ENCODE measurements at regions of chr1 and their contacts with region 1.

Region 1: GRCh38 chr1:192580351-192580962 is 4.9 kb downstream of the RGS1 start:
- DNase-seq: peak; percentile 55
- ATAC-seq: no peak
- H3K4me3 ChIP-seq: no peak overlapping the region
- H3K4me3 Mint-ChIP-seq: peak overlapping the region; percentile 73
- H3K27ac ChIP-seq: no peak overlapping the region
- H3K27ac Mint-ChIP-seq: no peak overlapping the region
- H3K4me1 ChIP-seq: peaks cover 11 to 13% of the 10 kb centered on the region in 2 donors
- H3K4me1 Mint-ChIP-seq: peaks cover 38% of the 10 kb centered on the region
- H3K27me3 ChIP-seq: peaks cover 0 to 5% (median 0%) of the 10 kb centered on the region in 4 experiments
- H3K27me3 Mint-ChIP-seq: peaks cover 6% of the 10 kb centered on the region
- CTCF ChIP-seq: peak; percentile 31

Region 2: DNA sequence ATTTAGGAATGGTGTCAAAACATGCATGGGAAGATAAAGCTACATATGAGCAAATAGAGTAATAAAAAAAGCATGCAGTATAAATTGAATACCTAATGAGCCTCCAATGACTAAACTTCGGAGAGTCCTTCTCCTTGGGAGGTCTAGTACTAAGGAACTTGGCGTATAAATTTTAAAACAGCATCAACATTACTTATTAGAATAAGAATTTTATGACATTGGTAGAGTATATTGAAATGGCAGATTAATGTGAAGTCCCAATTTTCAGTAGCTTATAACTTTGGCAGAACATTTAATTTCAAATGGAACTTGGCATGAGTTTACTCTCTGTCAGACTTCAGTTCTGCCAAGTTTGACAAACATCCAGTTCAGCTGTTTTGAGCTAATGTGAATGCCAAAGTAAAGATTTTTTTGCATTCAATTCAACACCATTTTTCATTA is 526.9 kb before region 1 on chr1:
- CTCF ChIA-PET with region 1: no interaction called
- POLR2A ChIA-PET with region 1: no interaction called
- intact Hi-C with region 1: no loop called
- DNase-seq: no peak
- ATAC-seq: no peak
- H3K4me3 ChIP-seq: no peak overlapping the region
- H3K4me3 Mint-ChIP-seq: no peak overlapping the region
- H3K27ac ChIP-seq: no peak overlapping the region
- H3K27ac Mint-ChIP-seq: no peak overlapping the region
- H3K4me1 ChIP-seq: no peaks in the 10 kb centered on the region
- H3K4me1 Mint-ChIP-seq: no peaks in the 10 kb centered on the region
- H3K27me3 ChIP-seq: no peaks in the 10 kb centered on the region
- H3K27me3 Mint-ChIP-seq: no peaks in the 10 kb centered on the region
- CTCF ChIP-seq: no peak

Region 3: DNA sequence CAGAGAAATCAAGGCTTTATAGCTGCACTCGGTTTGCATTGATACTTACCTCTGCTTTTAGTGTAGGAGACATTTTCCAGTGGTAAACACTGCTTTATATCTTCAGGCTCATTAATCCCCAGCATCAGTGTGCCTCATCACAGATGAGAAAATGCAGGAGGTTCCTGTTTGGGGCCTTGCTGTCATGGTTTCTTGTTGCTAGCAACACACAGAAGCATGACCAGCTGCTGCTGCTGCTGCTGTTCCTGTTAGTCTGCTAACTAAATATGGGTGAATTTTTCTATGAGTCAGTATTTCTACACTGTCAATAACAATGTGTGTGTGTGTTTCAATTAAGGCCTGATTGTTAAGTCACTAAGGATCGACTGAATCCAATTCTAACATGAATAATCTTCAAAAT is 90.7 kb before region 1 on chr1:
- CTCF ChIA-PET with region 1: interaction called, 4 read pairs
- POLR2A ChIA-PET with region 1: no interaction called
- intact Hi-C with region 1: loop called (anchors 5 kb)
- DNase-seq: peak; percentile 44
- ATAC-seq: peak; percentile 86
- H3K4me3 ChIP-seq: no peak overlapping the region
- H3K4me3 Mint-ChIP-seq: no peak overlapping the region
- H3K27ac ChIP-seq: no peak overlapping the region
- H3K27ac Mint-ChIP-seq: peak overlapping the region; percentile 18
- H3K4me1 ChIP-seq: no peaks in the 10 kb centered on the region
- H3K4me1 Mint-ChIP-seq: peaks cover 6% of the 10 kb centered on the region
- H3K27me3 ChIP-seq: peaks cover 0 to 2% (median 0%) of the 10 kb centered on the region in 4 experiments
- H3K27me3 Mint-ChIP-seq: no peaks in the 10 kb centered on the region
- CTCF ChIP-seq: no peak

Region 4: DNA sequence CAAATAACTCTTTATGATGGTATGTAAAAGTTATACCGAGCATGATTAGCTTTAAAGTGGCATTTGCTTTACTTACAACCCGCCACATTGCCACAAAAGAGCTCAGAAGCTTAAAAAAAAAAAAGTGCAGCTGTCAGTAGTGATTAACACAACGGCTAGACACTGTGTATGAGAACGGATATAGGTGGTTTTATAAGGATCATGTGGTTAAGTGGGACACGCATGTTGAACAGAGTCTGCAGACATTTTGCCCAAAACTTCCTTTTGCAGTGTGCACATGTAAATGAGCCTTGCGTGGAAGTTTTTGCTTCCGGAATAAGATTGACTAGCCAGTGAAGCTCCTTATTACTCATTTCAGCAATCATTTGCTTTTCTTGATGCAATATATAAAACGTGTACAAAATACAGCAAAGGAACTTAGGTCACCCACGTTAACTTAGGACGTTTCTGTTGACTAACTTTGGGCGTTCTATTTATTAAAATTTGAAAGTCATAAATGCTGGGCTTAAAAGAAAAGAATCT is 63.6 kb before region 1 on chr1:
- CTCF ChIA-PET with region 1: interaction called, 26 read pairs
- POLR2A ChIA-PET with region 1: interaction called, 14 read pairs
- intact Hi-C with region 1: loop called (anchors 1 kb)
- DNase-seq: peak; percentile 92
- ATAC-seq: peak; percentile 96
- H3K4me3 ChIP-seq: peak overlapping the region in 2 of 5 experiments; percentile 7 to 44
- H3K4me3 Mint-ChIP-seq: peak overlapping the region; percentile 80
- H3K27ac ChIP-seq: peak overlapping the region in 1 of 2 donors; percentile 57
- H3K27ac Mint-ChIP-seq: peak overlapping the region; percentile 64
- H3K4me1 ChIP-seq: peaks cover 43 to 51% of the 10 kb centered on the region in 2 donors
- H3K4me1 Mint-ChIP-seq: peaks cover 52% of the 10 kb centered on the region
- H3K27me3 ChIP-seq: peaks cover 0 to 17% (median 7%) of the 10 kb centered on the region in 4 experiments
- H3K27me3 Mint-ChIP-seq: peaks cover 18% of the 10 kb centered on the region
- CTCF ChIP-seq: no peak

Region 5: GRCh38 chr1:192550922-192551534 is 29.4 kb before region 1 on chr1:
- CTCF ChIA-PET with region 1: interaction called, 4 read pairs
- POLR2A ChIA-PET with region 1: no interaction called
- intact Hi-C with region 1: loop called (anchors 1 kb)
- DNase-seq: no peak
- ATAC-seq: no peak
- H3K4me3 ChIP-seq: no peak overlapping the region
- H3K4me3 Mint-ChIP-seq: peak overlapping the region; percentile 48
- H3K27ac ChIP-seq: no peak overlapping the region
- H3K27ac Mint-ChIP-seq: peak overlapping the region; percentile 35
- H3K4me1 ChIP-seq: peaks cover 2 to 3% of the 10 kb centered on the region in 2 donors
- H3K4me1 Mint-ChIP-seq: peaks cover 38% of the 10 kb centered on the region
- H3K27me3 ChIP-seq: peaks cover 0 to 9% (median 2%) of the 10 kb centered on the region in 4 experiments
- H3K27me3 Mint-ChIP-seq: peaks cover 17% of the 10 kb centered on the region
- CTCF ChIP-seq: no peak

Region 6: DNA sequence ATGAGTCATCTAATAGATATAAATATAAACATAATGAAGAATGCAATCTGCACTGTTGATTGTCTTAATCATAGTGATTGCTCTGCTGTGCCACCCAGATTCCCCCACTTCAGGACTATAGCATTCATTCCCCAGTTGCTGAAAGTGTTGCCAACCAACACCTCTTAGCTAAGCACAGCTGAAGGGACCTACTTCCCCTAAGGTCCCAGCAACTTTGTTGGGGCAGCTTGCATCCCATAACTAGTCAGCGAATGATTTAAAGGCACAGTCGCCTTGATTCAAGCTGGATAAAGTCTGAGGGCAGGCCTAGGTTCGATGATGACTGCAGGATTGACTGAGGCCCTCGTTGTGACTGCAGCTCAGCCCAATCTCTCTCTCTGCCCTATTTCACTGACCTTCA is 19.2 kb before region 1 on chr1:
- CTCF ChIA-PET with region 1: no interaction called
- POLR2A ChIA-PET with region 1: no interaction called
- intact Hi-C with region 1: no loop called
- DNase-seq: no peak
- ATAC-seq: no peak
- H3K4me3 ChIP-seq: no peak overlapping the region
- H3K4me3 Mint-ChIP-seq: no peak overlapping the region
- H3K27ac ChIP-seq: no peak overlapping the region
- H3K27ac Mint-ChIP-seq: no peak overlapping the region
- H3K4me1 ChIP-seq: no peaks in the 10 kb centered on the region
- H3K4me1 Mint-ChIP-seq: peaks cover 8% of the 10 kb centered on the region
- H3K27me3 ChIP-seq: peaks cover 0 to 2% (median 0%) of the 10 kb centered on the region in 4 experiments
- H3K27me3 Mint-ChIP-seq: peaks cover 2% of the 10 kb centered on the region
- CTCF ChIP-seq: no peak

Region 7: DNA sequence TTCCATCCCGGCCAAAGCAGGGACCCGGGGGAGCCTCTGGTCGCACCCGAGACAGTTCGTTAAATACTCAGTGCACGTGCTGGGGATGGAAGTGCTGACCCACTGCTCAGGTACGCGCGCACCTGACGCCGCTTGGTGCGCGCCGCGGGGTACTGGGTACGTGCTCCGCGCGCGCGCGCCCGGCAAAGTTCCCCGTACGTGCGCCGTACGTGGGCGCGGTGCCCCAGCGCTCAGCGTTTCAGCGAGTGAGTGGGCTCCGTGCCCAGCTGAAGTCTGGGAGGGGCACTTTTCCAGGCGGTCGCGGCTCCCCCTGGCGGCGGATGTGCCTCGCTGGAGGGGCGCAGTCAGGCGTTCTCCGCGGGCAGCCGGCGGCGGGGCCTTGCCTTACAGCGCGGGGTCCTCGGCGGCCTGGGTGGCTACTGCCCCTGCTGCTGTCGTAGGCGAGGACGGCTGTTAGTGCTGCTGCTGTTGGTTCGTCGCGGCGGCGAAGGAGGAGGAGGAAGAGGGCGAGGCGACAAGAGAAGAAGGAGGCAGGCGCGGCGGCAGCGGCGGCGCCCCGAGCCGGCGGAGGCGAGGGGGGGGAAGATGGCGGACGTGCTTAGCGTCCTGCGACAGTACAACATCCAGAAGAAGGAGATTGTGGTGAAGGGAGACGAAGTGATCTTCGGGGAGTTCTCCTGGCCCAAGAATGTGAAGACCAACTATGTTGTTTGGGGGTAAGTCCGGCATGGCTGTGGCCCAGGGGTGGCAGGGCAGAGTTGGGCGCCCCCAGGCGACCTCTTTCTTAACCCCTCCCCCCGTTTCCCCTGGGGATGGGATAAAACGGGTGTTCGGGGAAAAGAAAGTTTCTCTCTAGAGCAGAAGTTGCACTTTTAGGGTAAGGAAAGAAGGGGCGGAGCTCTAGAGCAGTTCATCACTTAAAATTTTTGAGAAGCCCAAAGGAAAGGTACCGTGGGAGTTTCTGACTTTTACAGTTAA is 541.4 kb after region 1 on chr1 and contains the start of gene CDC73:
- CTCF ChIA-PET with region 1: no interaction called
- POLR2A ChIA-PET with region 1: no interaction called
- intact Hi-C with region 1: loop called (anchors 1 kb)
- DNase-seq: peak; percentile 99
- ATAC-seq: peak; percentile 89
- H3K4me3 ChIP-seq: peak within 1 kb of the TSS; percentile 87 to 99 (median 93)
- H3K4me3 Mint-ChIP-seq: peak within 1 kb of the TSS; percentile 90
- H3K27ac ChIP-seq: peak within 1 kb of the TSS; percentile 82 to 93
- H3K27ac Mint-ChIP-seq: peak within 1 kb of the TSS; percentile 93
- H3K4me1 ChIP-seq: peaks cover 20 to 21% of the 10 kb centered on the region in 2 donors
- H3K4me1 Mint-ChIP-seq: peaks cover 40% of the 10 kb centered on the region
- H3K27me3 ChIP-seq: no peaks in the 10 kb centered on the region
- H3K27me3 Mint-ChIP-seq: no peaks in the 10 kb centered on the region
- CTCF ChIP-seq: peak; percentile 92
- total RNA-seq, gene CDC73: 71.7 and 77.2 TPM in 2 replicates

Measured in B cell (primary cell).